ENCODE measurements at regions of chr10 and their contacts with region 1.

Region 1: GRCh38 chr10:3811291-3811870 is 26.4 kb upstream of the KLF6 start:
- DNase-seq: peak; percentile 64
- CTCF ChIP-seq: no peak

Region 2: GRCh38 chr10:3866332-3866731 is 55.0 kb after region 1 on chr10:
- CTCF ChIA-PET with region 1: interaction called, 3 read pairs
- POLR2A ChIA-PET with region 1: interaction called, 10 read pairs
- DNase-seq: no peak
- CTCF ChIP-seq: no peak

Measured in GM10248 (cell line).